ENCODE measurements at regions of chr3 and their contacts with region 1.

Region 1: DNA sequence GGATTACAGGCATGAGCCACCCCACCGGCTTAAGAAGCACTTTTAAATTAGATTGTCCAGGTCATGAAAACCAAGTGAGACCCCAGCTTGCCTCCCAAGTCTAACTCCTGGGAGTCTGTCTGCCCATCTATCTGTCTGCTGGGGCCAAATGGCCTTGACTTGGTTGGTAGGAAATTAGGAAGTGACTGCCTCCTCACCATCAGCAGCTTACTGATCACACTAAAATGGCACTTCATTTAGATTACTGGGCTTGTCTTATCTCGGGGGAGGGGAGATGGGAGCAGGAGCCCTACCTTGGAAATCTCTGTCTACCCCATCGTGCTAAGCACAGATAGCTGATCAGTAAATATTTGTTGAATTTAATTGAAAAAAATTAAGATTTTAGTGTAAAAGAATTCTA is 5.6 kb upstream of the LRRC2 start:
- DNase-seq: no peak
- H3K4me3 ChIP-seq: no peak overlapping the region
- H3K4me3 Mint-ChIP-seq: no peak overlapping the region
- H3K27ac ChIP-seq: no peak overlapping the region
- H3K27ac Mint-ChIP-seq: no peak overlapping the region
- H3K4me1 ChIP-seq: no peaks in the 10 kb centered on the region
- H3K4me1 Mint-ChIP-seq: no peaks in the 10 kb centered on the region
- H3K27me3 ChIP-seq: no peaks in the 10 kb centered on the region
- H3K27me3 Mint-ChIP-seq: peaks cover 5 to 12% of the 10 kb centered on the region in 2 donors

Region 2: DNA sequence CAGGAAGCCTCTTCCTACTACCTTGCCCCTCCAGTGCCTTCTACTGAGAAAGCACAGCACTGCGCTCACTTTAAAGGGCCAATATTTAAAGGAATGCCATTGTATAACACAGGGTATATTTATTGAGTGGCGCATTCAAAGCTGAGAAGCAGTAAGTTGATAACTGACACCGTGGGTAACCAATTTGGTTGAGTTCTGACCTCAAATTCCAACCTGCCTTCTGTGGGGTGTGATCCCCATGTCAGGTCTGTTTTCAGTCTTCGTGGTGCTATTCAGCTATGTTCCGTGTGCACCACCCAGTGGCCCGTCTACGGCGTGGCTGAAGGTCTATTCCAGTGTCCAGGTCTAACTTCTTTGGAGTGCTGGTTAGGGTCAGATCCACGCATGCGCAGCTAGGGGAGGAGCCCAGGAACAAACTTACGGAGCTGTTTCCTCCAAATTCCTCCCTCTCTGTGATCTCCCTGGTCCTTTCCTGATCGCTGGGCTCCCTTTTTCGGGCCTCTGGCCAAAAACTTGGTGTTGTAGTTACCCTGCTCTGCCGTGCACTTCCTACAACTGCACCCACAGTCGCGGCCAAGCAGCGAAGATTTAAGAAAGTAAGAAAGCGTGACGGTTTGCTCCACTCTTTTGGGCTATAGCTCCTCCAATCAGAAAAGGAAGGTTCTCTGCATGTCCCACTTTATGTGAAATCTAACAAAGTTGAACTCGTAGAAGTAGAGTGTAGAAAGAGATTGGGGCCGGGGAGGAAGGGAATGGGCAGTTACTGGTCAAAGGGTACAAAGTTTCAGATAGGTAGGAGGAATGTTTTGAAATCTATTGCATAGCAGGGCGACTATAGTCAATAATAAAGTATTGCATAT is 13.3 kb before region 1 on chr3:
- CTCF ChIA-PET with region 1: interaction called, 11 read pairs
- POLR2A ChIA-PET with region 1: no interaction called
- intact Hi-C with region 1: no loop called
- DNase-seq: peak; percentile 68 to 74 (median 73)
- H3K4me3 ChIP-seq: peak overlapping the region in 1 of 2 donors; percentile 25
- H3K4me3 Mint-ChIP-seq: peak overlapping the region; percentile 76 to 87 (median 82)
- H3K27ac ChIP-seq: no peak overlapping the region
- H3K27ac Mint-ChIP-seq: peak overlapping the region in 6 of 7 donors; percentile 13 to 71 (median 36)
- H3K4me1 ChIP-seq: peaks cover 14% of the 10 kb centered on the region
- H3K4me1 Mint-ChIP-seq: peaks cover 10 to 17% (median 15%) of the 10 kb centered on the region in 4 donors
- H3K27me3 ChIP-seq: no peaks in the 10 kb centered on the region
- H3K27me3 Mint-ChIP-seq: peaks cover 1 to 4% of the 10 kb centered on the region in 2 donors

Region 3: DNA sequence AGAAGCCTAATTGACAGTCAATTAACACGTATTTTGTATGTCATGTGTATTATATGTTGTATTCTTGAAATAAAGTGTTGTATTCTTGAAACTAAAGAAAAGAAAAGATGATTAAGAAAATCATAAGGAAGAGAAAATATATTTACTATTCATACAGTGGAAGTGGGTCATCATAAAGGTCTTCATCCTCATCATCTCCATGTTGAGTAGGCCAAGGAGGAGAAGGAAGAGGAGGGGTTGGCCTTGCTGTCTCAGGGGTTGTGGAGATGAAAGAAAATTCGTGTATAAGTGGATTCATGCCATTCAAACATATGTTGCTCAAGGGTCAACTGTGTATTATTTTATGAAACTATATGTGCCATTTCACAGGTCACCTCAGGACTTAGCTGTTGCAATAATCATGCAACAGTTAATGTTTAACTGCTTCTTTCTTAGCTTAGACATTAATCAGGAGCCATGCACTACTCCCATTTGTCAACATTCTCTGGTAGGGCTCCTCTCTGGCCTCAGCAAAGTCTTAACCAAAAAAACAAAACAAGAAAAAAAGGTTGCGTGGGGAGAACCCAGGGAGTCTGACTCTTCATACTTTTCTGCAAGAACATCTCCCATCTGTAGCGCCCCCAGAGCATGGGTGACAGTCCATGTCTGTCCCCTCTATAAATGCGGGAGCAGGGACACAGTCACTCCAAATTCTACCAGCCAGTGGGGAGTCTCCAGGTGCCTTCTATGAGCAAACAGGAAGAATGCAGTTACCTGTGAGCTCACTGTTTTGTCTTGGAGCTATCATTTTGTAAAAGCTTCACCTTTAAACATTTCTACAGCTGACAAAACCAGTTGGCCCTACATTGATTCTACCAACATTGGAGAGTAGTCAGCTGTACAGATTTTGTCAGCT is 14.4 kb after region 1 on chr3:
- CTCF ChIA-PET with region 1: no interaction called
- POLR2A ChIA-PET with region 1: no interaction called
- intact Hi-C with region 1: no loop called
- DNase-seq: no peak
- H3K4me3 ChIP-seq: no peak overlapping the region
- H3K4me3 Mint-ChIP-seq: no peak overlapping the region
- H3K27ac ChIP-seq: no peak overlapping the region
- H3K27ac Mint-ChIP-seq: no peak overlapping the region
- H3K4me1 ChIP-seq: no peaks in the 10 kb centered on the region
- H3K4me1 Mint-ChIP-seq: peaks cover 2 to 12% (median 5%) of the 10 kb centered on the region in 4 donors
- H3K27me3 ChIP-seq: no peaks in the 10 kb centered on the region
- H3K27me3 Mint-ChIP-seq: peaks cover 0 to 3% of the 10 kb centered on the region in 2 donors

Measured in CD4-positive, alpha-beta memory T cell (primary cell).